ENCODE measurements at regions of chr9 and their contacts with region 1.

Region 1: DNA sequence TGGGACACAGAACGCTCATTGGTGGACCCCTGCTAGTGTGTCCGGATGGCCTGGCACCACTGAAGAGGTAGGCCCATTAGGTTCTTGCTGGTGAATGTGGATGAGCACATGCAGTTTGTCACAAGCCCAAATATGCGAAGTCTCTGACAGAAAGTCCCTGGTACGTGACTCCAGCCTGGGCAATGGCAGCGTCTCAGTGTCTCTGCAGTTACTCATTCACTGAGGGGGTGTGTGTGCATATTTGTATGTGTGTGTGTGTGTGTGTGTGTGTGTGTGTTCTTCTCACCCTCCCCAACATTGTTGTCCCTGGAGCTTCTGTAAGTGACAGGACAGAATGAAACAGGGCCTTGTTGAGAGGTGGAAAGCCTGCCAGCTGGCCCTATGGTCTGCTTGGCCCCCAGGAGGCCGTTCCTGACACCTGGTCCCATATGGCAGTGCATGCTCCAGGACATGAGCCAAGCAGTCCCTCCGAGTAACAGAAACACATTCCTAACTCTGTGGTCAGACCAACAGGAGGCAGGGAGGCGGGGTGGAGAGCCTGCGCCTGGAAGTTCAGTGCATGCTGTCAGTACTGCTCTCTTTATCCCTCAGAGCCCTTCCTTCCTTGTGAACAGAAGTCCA is 169.9 kb downstream of the SLC28A3 start:
- DNase-seq: peak; percentile 73
- H3K4me3 ChIP-seq: no peak overlapping the region
- H3K27ac ChIP-seq: peak overlapping the region in 4 of 8 donors; percentile 12 to 64 (median 22)
- H3K4me1 ChIP-seq: peaks cover 0 to 13% (median 3%) of the 10 kb centered on the region in 6 donors
- H3K27me3 ChIP-seq: no peaks in the 10 kb centered on the region
- CTCF ChIP-seq: peak in 2 of 11 experiments; percentile 17 to 27
- POLR2A ChIP-seq: no peak

Region 2: GRCh38 chr9:83669067-83669466 is 501.6 kb before region 1 on chr9:
- intact Hi-C with region 1: no loop called
- DNase-seq: no peak
- H3K4me3 ChIP-seq: no peak overlapping the region
- H3K27ac ChIP-seq: no peak overlapping the region
- H3K4me1 ChIP-seq: peaks cover 8 to 27% (median 11%) of the 10 kb centered on the region in 6 donors
- H3K27me3 ChIP-seq: no peaks in the 10 kb centered on the region
- CTCF ChIP-seq: no peak
- POLR2A ChIP-seq: no peak

Region 3: GRCh38 chr9:83937911-83938323 is 232.7 kb before region 1 on chr9:
- intact Hi-C with region 1: loop called (anchors 10 kb)
- DNase-seq: no peak
- H3K4me3 ChIP-seq: no peak overlapping the region
- H3K27ac ChIP-seq: peak overlapping the region in 1 of 8 donors; percentile 22
- H3K4me1 ChIP-seq: peaks cover 0 to 39% (median 7%) of the 10 kb centered on the region in 6 donors
- H3K27me3 ChIP-seq: no peaks in the 10 kb centered on the region
- CTCF ChIP-seq: peak; percentile 53 to 85 (median 69)
- POLR2A ChIP-seq: no peak

Region 4: DNA sequence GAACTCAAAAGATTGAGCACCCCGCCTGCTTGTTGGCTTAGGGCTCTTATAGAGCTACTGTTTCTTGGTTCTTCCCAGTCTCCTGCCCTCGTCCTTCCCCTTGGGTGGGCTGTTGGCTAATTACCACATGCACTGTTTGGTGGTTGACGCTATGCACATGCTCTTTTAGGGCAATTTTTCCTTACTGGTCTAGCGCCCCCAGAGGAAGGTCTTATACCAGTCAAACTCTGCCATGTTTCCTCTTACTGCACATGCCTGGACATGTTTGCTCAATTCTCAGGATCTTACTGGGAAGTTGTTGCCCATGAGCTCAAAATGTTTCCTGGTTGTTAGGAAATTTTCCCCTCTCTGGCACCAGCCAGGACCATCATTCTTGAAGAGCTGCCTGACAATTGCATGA is 68.0 kb after region 1 on chr9:
- intact Hi-C with region 1: loop called (anchors 10 kb)
- DNase-seq: no peak
- H3K4me3 ChIP-seq: no peak overlapping the region
- H3K27ac ChIP-seq: no peak overlapping the region
- H3K4me1 ChIP-seq: no peaks in the 10 kb centered on the region
- H3K27me3 ChIP-seq: no peaks in the 10 kb centered on the region
- CTCF ChIP-seq: no peak
- POLR2A ChIP-seq: no peak

Region 5: DNA sequence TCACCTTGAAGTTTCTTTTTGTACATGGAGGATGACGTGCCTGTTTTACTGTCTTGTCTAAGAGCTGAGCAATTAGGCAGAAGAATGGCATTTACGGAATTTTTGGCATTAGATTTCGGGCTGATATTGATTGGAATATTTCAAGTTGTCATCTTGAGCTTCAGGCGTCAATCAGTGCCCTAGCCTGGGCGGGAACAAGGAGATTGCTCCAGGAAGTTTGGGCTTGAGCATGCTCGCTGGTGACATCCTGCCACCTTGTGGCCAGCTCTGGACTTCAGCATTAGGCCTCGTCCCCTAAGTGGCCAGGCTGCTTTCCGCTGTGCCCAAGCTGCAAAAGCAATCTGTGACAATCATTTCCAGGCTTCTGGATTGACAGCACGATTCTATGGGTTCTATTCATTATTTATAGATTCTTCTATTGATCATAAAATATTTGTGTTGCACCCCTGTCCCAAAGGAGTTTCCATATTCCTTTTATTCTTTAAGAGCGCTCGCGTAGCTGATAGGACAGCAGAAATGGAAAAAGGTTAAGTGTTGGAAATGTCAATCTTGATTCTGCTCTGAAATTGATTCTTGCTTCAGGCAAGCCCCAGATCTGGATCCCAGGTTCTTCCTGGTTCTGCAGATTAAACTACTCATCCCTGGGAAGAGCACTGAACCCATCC is 90.6 kb after region 1 on chr9:
- intact Hi-C with region 1: loop called (anchors 10 kb)
- DNase-seq: peak; percentile 91
- H3K4me3 ChIP-seq: peak overlapping the region in 2 of 8 donors; percentile 2 to 50
- H3K27ac ChIP-seq: no peak overlapping the region
- H3K4me1 ChIP-seq: peaks cover 0 to 18% (median 6%) of the 10 kb centered on the region in 6 donors
- H3K27me3 ChIP-seq: peaks cover 0 to 9% (median 0%) of the 10 kb centered on the region in 7 donors
- CTCF ChIP-seq: peak; percentile 63 to 91 (median 86)
- POLR2A ChIP-seq: no peak

Measured in spleen (tissue), 13 donors.